ENCODE measurements at regions of chr2 and their contacts with region 1.

Region 1: GRCh38 chr2:88669371-88670214 is 21.9 kb upstream of the RPIA start:
- DNase-seq: peak in 1 of 4 donors; percentile 23
- ATAC-seq: peak; percentile 76
- H3K4me3 ChIP-seq: no peak overlapping the region
- H3K27ac ChIP-seq: no peak overlapping the region
- H3K4me1 ChIP-seq: no peaks in the 10 kb centered on the region
- H3K27me3 ChIP-seq: no peaks in the 10 kb centered on the region
- CTCF ChIP-seq: peak in 1 of 2 donors; percentile 21

Region 2: DNA sequence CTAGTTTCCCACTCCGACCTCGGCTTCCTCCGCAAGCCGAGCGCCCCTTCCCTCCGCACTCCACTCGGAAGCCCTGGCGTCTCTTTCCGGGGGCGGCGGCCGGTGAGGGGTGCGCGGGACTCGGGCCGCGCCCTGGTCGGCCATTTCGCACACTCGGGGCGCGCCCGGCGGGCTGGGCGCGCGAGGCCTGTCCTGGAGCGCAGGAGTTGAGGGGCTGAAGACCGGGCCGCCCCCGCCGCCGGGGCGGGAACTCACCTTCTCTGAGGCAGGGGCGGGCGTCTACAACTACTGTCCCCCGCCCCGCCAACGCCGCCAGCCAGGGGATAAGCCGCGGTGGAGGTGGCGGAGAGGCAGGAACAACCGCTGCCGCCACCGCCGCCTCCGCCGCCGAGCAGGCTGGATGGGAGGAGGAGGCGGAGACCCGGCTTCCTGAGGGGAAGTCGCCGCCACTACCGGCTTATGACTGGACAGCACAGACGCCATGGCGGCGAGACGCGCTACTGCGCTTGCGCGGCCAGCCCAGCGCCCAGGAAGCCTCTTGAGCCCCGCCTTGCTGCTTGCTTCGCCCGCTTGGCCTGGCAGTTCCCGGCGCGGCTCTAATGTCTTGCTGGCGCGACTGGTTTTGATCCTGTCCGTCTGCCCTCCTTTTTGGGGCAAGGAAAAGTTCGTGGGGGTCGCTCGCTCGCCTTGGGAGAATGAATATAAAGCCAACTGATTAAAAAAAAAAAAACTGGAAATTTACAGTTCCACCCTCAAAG is 614.0 kb before region 1 on chr2 and contains the start of gene KRCC1:
- intact Hi-C with region 1: no loop called
- DNase-seq: peak; percentile 91 to 99 (median 97)
- ATAC-seq: peak; percentile 94
- H3K4me3 ChIP-seq: peak within 1 kb of the TSS; percentile 88 to 94
- H3K27ac ChIP-seq: peak within 1 kb of the TSS; percentile 97 to 100
- H3K4me1 ChIP-seq: peaks cover 9 to 40% of the 10 kb centered on the region in 2 donors
- H3K27me3 ChIP-seq: no peaks in the 10 kb centered on the region
- CTCF ChIP-seq: no peak
- polyA plus RNA-seq, gene KRCC1: 47.1 to 52.9 (median 50.8) TPM

Region 3: DNA sequence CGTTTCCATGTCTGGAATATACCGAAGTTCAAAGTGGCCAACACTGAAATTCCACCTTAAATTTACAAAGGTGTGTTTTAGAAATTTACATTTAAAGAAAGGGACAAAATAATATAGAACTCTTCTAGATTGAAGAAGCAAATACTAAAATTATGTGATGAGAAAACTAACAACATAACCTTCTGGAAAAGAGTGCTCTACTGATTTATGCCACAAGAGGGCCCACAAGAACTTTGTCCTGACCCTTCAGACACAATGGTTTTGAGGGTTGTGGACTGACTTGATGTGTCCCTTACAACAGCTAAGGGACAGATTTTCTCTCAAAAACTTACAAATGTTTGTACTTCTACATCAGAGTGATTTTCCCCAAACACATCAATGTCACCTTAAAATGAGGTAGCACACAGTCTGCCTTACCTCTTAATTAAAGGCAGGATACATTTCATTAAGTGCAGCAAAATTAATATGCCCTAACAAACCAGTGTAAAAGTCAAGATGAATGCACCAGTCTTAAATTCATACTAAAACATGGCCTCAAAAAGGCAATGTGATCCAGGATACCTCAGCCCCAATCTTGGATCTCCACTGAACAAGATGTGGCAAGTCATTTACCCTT is 78.5 kb before region 1 on chr2:
- intact Hi-C with region 1: loop called in 1 of 2 experiments (anchors 5 kb)
- DNase-seq: peak in 2 of 4 donors; percentile 22 to 68
- ATAC-seq: peak; percentile 96
- H3K4me3 ChIP-seq: no peak overlapping the region
- H3K27ac ChIP-seq: no peak overlapping the region
- H3K4me1 ChIP-seq: no peaks in the 10 kb centered on the region
- H3K27me3 ChIP-seq: no peaks in the 10 kb centered on the region
- CTCF ChIP-seq: peak; percentile 60 to 77

Measured in left lung (tissue), 14 donors.